ENCODE measurements at regions of chr14 and their contacts with region 1.

Region 1: GRCh38 chr14:54347997-54348611 is 48.7 kb upstream of the CDKN3 start:
- DNase-seq: peak; percentile 43
- H3K4me3 ChIP-seq: no peak overlapping the region
- H3K27ac ChIP-seq: no peak overlapping the region
- H3K4me1 ChIP-seq: peaks cover 1% of the 10 kb centered on the region
- H3K27me3 ChIP-seq: no peaks in the 10 kb centered on the region
- CTCF ChIP-seq: peak in 3 of 4 experiments; percentile 72 to 81 (median 79)
- POLR2A ChIP-seq: no peak

Region 2: GRCh38 chr14:53295985-53296582 is 1052.0 kb before region 1 on chr14:
- intact Hi-C with region 1: loop called (anchors 5 kb)
- DNase-seq: no peak
- H3K4me3 ChIP-seq: no peak overlapping the region
- H3K27ac ChIP-seq: no peak overlapping the region
- H3K4me1 ChIP-seq: no peaks in the 10 kb centered on the region
- H3K27me3 ChIP-seq: no peaks in the 10 kb centered on the region
- CTCF ChIP-seq: peak; percentile 47 to 85 (median 58)
- POLR2A ChIP-seq: no peak

Region 3: DNA sequence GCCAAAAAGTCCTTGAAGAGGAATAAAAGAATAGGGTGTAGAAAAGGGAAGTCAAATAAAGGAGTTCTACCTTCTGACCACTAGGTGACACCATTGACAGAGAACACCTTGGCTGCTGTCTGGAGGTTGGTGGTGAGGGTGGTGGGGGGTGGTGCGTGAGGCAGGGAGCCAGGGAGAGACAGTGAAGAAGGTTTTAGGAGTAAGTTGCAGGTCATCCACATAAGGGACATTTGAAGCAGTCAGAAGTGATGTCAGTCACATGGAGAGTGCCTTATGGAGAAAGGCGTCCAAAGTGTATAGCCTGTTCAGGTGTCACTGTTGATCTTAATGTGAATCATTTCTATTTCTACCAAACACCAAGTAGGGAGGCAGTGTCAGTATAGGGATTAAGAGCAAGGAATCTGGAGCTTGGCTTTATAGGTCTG is 915.7 kb before region 1 on chr14:
- intact Hi-C with region 1: loop called (anchors 10 kb)
- DNase-seq: no peak
- H3K4me3 ChIP-seq: no peak overlapping the region
- H3K27ac ChIP-seq: no peak overlapping the region
- H3K4me1 ChIP-seq: no peaks in the 10 kb centered on the region
- H3K27me3 ChIP-seq: no peaks in the 10 kb centered on the region
- CTCF ChIP-seq: peak in 3 of 4 experiments; percentile 37 to 50 (median 44)
- POLR2A ChIP-seq: no peak